HAP-1 (cell line): ENCODE measurements at regions of chr11 and their contacts with region 1.

Region 1: DNA sequence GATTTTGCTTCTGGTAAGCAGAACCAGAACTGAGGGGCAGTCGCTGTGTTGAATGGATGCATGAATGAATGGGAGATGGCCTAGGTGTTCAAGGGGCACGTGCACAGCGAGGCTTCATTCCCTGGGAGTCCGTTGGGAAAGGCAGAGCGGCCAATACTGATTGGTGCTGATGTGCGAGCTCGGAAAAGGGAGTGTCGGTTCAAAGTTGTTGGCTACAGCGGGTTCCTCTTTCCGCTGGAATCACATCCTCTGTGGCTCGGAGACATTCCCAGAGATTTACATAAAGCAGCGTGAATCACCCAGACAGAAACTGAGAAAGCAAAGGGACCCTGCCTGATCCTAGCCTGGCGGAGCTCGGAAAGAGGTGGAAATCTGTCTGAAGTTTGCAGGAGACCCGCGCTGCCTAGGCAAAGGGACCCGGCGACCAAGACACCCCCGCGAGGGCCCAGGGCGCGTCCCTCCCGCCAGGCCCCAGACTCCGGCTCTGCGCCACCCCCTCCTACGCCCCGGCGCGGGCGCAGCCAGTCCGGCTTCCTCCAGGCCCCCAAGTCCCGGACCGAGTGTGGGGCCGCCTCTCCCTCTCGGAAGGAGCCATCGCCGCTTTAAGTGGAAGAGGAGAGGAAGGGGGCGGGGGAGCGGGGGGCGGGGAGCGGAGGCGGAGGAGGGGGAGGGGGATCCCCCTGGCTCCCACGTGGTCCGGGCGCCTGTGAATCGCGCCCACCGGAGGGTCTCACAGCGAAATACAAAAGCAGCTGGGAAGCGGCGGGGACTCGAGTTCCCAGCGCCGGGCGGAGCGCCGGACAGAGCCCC is at the start of gene FJX1:
- DNase-seq: peak; percentile 55 to 82
- H3K4me3 ChIP-seq: peak within 1 kb of the TSS; percentile 45
- H3K4me1 ChIP-seq: peaks cover 8% of the 10 kb centered on the region; the same call in 1 of the 2 replicates
- H3K27me3 ChIP-seq: peaks cover 3% of the 10 kb centered on the region; the same call in 1 of the 2 replicates

Region 2: DNA sequence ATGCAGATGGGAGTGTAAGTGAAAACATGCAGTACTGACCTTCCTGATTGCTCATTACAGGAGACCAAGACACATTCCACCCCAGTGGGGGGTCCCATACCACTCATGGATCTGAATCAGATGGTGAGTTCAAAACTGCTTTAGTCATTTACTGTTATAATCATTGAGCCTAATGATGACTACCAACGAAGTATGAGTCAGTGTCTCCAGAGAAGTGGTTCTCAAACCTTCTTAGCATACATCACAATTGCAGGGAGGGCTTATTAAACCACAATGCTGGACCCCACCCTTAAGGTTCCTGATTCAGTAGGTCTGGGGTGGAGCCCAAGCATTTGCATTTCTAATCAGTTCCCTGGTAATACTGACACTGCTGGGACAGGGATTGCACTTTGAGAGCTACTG is 403.1 kb before region 1 on chr11:
- in situ Hi-C with region 1: no loop called
- DNase-seq: peak in 1 of 2 experiments; percentile 24
- H3K4me3 ChIP-seq: no peak overlapping the region
- H3K4me1 ChIP-seq: peaks cover 10% of the 10 kb centered on the region
- H3K27me3 ChIP-seq: no peaks in the 10 kb centered on the region

Region 3: GRCh38 chr11:35387111-35387982 is 230.5 kb before region 1 on chr11:
- in situ Hi-C with region 1: no loop called
- DNase-seq: no peak
- H3K4me3 ChIP-seq: no peak overlapping the region
- H3K4me1 ChIP-seq: peaks cover 6% of the 10 kb centered on the region
- H3K27me3 ChIP-seq: no peaks in the 10 kb centered on the region

Region 4: GRCh38 chr11:36264011-36264972 is 646.4 kb after region 1 on chr11:
- in situ Hi-C with region 1: loop called (anchors 5 kb)
- DNase-seq: no peak
- H3K4me3 ChIP-seq: no peak overlapping the region
- H3K4me1 ChIP-seq: no peaks in the 10 kb centered on the region
- H3K27me3 ChIP-seq: peaks cover 7% of the 10 kb centered on the region

Region 5: GRCh38 chr11:36455658-36456111 is 837.8 kb after region 1 on chr11:
- in situ Hi-C with region 1: loop called (anchors 25 kb)
- DNase-seq: no peak
- H3K4me3 ChIP-seq: no peak overlapping the region
- H3K4me1 ChIP-seq: peaks cover 6% of the 10 kb centered on the region
- H3K27me3 ChIP-seq: no peaks in the 10 kb centered on the region